Left cardiac atrium (tissue), 4 donors: ENCODE measurements at regions of chr1 and their contacts with region 1.

Region 1: GRCh38 chr1:206693029-206693428 is 8.3 kb downstream of the MAPKAPK2 start:
- DNase-seq: peak; percentile 88
- ATAC-seq: peak; percentile 86

Region 2: DNA sequence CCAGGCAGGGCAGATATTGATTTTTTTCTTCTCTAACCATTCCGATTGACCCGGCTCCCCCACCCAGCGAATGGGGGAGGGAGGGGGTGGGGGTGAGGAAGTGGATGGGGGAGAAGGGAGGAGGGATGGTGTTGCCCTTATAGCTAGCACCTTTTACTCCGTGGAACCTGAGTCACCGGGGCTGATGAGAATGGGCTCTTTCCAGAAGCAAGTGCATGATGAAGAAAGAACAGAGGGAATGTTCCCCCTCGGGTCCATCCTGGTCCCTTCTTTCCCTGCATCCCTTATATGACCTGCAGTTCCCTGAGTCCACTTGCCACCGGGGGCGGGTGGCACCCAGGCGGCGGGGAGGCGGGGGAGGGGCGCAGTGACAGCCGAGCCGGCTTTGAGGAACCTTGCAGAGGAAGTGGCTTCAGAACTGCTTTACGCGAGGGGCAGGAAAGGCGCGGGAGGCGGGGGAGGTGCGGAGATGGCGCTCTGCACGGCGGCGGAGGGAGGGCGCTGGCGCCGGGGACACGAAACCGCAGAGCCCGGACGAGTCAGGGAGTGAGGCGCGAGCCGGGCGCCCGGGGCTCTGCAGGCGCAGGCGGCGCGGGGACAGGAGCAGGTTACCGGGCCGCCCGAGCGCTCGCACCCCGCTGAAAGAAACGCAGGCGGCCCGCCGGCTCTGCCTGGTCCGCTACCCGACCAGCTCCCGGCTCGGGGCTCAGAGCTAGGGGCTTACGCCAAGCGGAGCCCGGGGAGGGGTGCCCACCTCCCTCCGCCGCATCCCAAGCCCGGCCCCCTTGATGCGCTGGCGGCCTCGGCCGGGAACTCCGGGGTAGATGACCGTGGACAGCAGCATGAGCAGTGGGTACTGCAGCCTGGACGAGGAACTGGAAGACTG is 136.0 kb before region 1 on chr1:
- intact Hi-C with region 1: no loop called
- DNase-seq: peak; percentile 86
- ATAC-seq: peak; percentile 67 to 84

Region 3: GRCh38 chr1:206658264-206658980 is 34.6 kb before region 1 on chr1:
- intact Hi-C with region 1: loop called in 1 of 2 experiments (anchors 5 kb)
- DNase-seq: peak; percentile 40
- ATAC-seq: peak; percentile 42 to 60